HCT116 (cell line): ENCODE measurements at regions of chr2 and their contacts with region 1.

Region 1: DNA sequence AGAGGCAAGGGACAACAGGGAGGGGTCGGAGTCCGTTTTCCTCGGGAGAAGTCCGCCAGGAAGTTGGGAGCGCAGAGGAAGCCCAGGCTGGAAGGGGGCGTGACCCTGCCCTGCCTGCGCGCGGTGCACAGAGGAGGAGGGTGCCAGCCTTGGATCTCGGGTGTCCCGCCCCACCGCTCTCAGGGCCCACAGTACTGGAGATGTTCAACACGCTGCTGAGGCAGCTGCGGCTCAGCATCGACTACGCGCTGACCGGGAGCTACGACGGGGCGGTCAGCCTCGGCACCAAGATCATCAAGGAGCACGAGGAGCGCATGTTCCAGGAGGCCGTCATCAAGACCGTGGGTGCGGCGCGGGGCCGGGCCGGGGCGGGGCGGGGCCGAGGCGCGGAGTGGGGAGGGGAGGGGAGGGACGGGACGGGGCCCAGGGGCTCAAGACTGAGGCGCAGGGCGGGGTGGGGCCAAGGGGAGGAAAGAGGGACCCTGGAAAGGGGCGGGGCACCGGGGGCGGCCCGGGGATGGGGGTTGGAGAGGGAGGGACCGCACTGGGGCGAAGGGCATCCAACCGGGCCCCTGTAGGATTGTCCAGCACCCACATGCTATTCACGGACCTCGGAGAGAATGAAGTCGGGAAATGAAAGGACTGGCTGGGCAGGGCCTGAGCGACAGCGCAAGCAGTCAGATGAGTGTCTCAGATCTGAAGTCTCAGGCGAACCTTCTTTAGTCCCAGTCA is 36.6 kb downstream of the POMC start:
- DNase-seq: no peak
- ATAC-seq: no peak
- H3K4me3 ChIP-seq: no peak overlapping the region
- H3K27ac ChIP-seq: no peak overlapping the region
- H3K4me1 ChIP-seq: peaks cover 0 to 3% of the 10 kb centered on the region in 2 experiments; a peak in 1 of 4 replicates
- H3K27me3 ChIP-seq: 0 out of 2 replicates have a peak, but pooled peaks cover 4% of the 10 kb centered on the region
- CTCF ChIP-seq: no peak
- POLR2A ChIP-seq: no peak
- RAD21 ChIP-seq: no peak

Region 2: DNA sequence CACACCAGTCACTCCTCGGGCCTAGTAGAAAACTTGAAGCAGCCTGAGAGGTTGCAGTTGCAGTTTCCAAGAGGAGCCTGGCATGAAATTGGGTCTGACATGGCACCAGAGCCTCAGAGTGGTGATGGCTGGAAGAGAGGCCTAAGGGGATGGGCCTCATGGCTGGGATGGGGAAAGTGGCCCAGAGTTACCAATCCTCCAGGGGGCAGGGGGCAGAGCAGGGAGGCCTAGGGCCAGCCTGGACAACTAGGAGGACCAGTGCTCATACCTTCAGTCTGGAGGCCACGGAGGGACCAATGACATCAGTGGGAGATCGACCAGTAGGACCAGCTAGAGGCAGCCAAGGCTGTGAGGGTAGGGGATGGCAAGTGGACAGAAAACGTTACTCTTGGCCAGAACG is 196.6 kb before region 1 on chr2:
- CTCF ChIA-PET with region 1: no interaction called
- POLR2A ChIA-PET with region 1: no interaction called
- RAD21 ChIA-PET with region 1: no interaction called
- intact Hi-C with region 1: no loop called
- DNase-seq: no peak
- ATAC-seq: no peak
- H3K4me3 ChIP-seq: no peak overlapping the region
- H3K27ac ChIP-seq: no peak overlapping the region
- H3K4me1 ChIP-seq: no peaks in the 10 kb centered on the region
- H3K27me3 ChIP-seq: no peaks in the 10 kb centered on the region
- CTCF ChIP-seq: no peak
- POLR2A ChIP-seq: no peak
- RAD21 ChIP-seq: no peak

Region 3: DNA sequence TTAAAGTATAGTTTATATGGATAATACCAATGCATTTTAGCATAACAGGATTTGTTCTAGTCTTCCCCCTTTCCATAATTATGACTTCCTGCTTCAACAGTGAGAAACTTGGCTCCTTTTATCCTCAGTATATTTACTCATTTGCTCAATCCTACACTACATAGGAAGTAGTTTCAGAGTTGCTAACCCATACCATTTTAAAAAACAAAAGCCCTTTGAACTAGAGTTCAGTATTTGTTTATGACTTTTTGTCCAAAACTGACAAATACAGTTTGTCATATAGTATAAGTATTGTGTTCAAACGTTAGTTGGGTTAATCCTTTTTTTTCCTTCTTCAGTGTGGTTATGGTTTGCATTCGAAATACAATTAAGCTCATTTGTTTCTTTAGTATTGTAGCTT is 154.1 kb before region 1 on chr2:
- CTCF ChIA-PET with region 1: interaction called, 180 read pairs
- POLR2A ChIA-PET with region 1: interaction called, 31 read pairs
- RAD21 ChIA-PET with region 1: interaction called, 20 to 44 read pairs
- intact Hi-C with region 1: loop called (anchors 1 kb)
- DNase-seq: no peak
- ATAC-seq: no peak
- H3K4me3 ChIP-seq: no peak overlapping the region
- H3K27ac ChIP-seq: no peak overlapping the region
- H3K4me1 ChIP-seq: peaks cover 4 to 5% of the 10 kb centered on the region in 2 experiments; a peak in 3 of 4 replicates
- H3K27me3 ChIP-seq: no peaks in the 10 kb centered on the region
- CTCF ChIP-seq: no peak
- POLR2A ChIP-seq: no peak
- RAD21 ChIP-seq: no peak